GM12878 (cell line): ENCODE measurements at regions of chr16 and their contacts with region 1.

Region 1: DNA sequence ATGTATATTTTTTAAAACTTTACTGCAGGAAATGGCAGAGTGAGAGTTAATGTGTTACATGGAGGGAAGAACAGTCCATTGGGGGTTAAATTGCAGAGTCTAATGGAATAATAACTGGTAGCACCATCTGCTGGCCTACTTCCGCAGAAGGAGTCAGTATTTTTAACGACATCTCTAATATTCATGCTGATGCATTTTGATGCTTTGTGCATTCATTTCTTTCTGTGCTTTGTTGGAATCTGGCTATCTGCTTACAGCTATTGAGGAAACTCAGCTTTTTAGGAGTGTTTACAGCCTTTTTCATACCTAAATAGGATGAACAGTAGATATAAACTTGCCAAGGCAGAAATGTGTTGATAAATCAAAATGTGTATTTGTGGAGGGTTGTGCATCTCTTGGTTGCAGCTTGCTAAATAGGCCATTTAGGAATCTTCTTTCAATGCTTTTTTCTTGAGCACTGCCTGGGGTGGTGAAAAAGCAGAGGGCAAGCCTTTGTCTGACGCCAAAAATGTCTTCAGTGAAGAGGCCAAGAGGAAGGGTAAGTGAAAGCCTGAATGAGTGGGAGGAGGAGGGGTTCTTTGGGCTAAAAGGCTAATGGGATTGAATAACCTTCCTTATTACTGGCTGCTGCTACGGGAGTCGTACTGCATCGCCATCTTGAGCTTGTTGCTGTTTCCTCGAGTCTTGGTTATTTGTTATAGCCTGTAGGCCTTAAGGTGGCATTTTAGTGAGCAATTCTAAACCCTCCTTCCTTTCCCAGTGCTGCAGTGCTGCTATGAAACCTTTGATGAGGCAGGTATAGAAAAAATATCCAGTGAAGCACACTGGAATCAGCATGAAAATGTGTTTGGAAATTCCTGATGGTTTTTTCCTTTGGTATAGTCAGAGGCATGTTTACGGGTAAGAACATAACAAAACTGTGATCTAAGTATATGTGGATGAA is 153.3 kb downstream of the CHD9 start:
- DNase-seq: peak; percentile 69
- ATAC-seq: peak; percentile 83
- H3K4me3 ChIP-seq: peak overlapping the region; percentile 72
- H3K27ac ChIP-seq: peak overlapping the region; percentile 95
- H3K4me1 ChIP-seq: peaks cover 3% of the 10 kb centered on the region; the same call in 1 of the 2 replicates
- H3K27me3 ChIP-seq: no peaks in the 10 kb centered on the region
- CTCF ChIP-seq: peak; percentile 51 to 63 (median 55)
- EP300 ChIP-seq: no peak
- POLR2A ChIP-seq: peak; percentile 57; the same call in 1 of the 2 replicates
- RAD21 ChIP-seq: peak; percentile 58

Region 2: GRCh38 chr16:52837251-52837650 is 370.8 kb before region 1 on chr16:
- CTCF ChIA-PET with region 1: no interaction called
- POLR2A ChIA-PET with region 1: no interaction called
- RAD21 ChIA-PET with region 1: no interaction called
- SMC1A ChIA-PET with region 1: no interaction called
- in situ Hi-C with region 1: no loop called
- intact Hi-C with region 1: no loop called
- DNase-seq: no peak
- ATAC-seq: no peak
- H3K4me3 ChIP-seq: no peak overlapping the region
- H3K27ac ChIP-seq: no peak overlapping the region
- H3K4me1 ChIP-seq: no peaks in the 10 kb centered on the region
- H3K27me3 ChIP-seq: no peaks in the 10 kb centered on the region
- CTCF ChIP-seq: no peak
- EP300 ChIP-seq: no peak
- POLR2A ChIP-seq: no peak
- RAD21 ChIP-seq: no peak

Region 3: GRCh38 chr16:52976539-52977167 is 231.4 kb before region 1 on chr16:
- CTCF ChIA-PET with region 1: interaction called, 8 read pairs
- POLR2A ChIA-PET with region 1: no interaction called
- RAD21 ChIA-PET with region 1: interaction called, 6 read pairs
- SMC1A ChIA-PET with region 1: no interaction called
- in situ Hi-C with region 1: no loop called
- intact Hi-C with region 1: loop called (anchors 2 kb)
- DNase-seq: no peak
- ATAC-seq: peak; percentile 84
- H3K4me3 ChIP-seq: no peak overlapping the region
- H3K27ac ChIP-seq: no peak overlapping the region
- H3K4me1 ChIP-seq: no peaks in the 10 kb centered on the region
- H3K27me3 ChIP-seq: no peaks in the 10 kb centered on the region
- CTCF ChIP-seq: peak; percentile 38 to 55 (median 55); a peak in 5 of 6 replicates
- EP300 ChIP-seq: no peak
- POLR2A ChIP-seq: no peak
- RAD21 ChIP-seq: peak; percentile 69

Region 4: DNA sequence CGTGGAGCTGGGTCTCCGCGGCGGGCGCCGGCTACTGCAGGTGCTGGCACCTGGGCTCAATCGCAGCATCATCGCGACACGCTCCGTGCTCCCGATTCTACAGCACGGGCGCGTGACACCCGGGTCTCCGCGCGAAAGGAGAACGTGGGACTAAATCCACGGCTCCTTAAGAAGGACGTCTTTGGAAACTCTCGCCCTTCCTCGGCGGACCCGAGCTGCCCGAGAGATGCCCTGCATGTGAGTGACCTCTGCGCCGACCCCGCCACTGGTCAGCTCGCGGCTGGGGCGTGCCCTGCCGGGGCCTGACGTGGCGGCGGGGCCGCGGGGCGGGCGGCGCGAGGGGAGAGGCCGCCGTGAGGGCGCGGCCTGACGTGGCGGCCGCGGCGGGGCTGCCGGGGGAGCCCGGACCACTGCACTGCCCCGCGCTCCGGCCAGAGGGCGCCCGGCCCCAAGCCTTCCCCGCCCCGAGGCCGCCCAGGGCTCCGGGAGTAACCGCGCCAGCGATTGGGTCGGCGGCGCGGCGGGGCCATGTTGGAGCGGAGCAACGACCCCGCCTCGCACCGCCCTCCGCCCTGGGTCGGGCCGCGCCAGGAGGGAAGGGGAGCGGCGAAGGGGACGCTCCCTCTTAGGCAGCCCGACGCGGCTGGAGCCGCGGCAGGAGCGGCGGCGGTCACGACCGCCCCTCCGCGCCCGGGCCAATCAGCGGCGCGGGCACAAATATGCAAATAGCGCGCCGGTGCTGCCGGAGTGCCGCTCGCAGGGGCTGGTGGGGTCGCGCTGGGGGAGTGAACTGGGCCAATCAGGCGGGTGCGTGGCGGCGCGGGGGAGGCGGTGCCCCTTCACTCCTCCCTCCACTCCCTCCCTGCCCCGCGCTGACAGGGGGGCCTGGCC is 77.7 kb before region 1 on chr16:
- CTCF ChIA-PET with region 1: interaction called, 13 read pairs
- POLR2A ChIA-PET with region 1: no interaction called
- RAD21 ChIA-PET with region 1: interaction called, 4 read pairs
- SMC1A ChIA-PET with region 1: interaction called, 9 read pairs
- in situ Hi-C with region 1: loop called (anchors 5 kb)
- intact Hi-C with region 1: loop called (anchors 1 kb)
- DNase-seq: peak; percentile 68
- ATAC-seq: peak; percentile 91
- H3K4me3 ChIP-seq: peak overlapping the region; percentile 67
- H3K27ac ChIP-seq: peak overlapping the region; percentile 79
- H3K4me1 ChIP-seq: peaks cover 20% of the 10 kb centered on the region
- H3K27me3 ChIP-seq: no peaks in the 10 kb centered on the region
- CTCF ChIP-seq: peak; percentile 47 to 81 (median 58); a peak in 5 of 6 replicates
- EP300 ChIP-seq: no peak; a peak in 1 of 4 replicates
- POLR2A ChIP-seq: peak; percentile 81
- RAD21 ChIP-seq: peak; percentile 73

Region 5: GRCh38 chr16:53159781-53160436 is 48.2 kb before region 1 on chr16:
- CTCF ChIA-PET with region 1: interaction called, 16 read pairs
- POLR2A ChIA-PET with region 1: no interaction called
- RAD21 ChIA-PET with region 1: interaction called, 7 read pairs
- SMC1A ChIA-PET with region 1: interaction called, 21 read pairs
- in situ Hi-C with region 1: no loop called
- intact Hi-C with region 1: loop called (anchors 5 kb)
- DNase-seq: peak; percentile 20
- ATAC-seq: peak; percentile 99
- H3K4me3 ChIP-seq: no peak overlapping the region
- H3K27ac ChIP-seq: no peak overlapping the region
- H3K4me1 ChIP-seq: no peaks in the 10 kb centered on the region
- H3K27me3 ChIP-seq: no peaks in the 10 kb centered on the region
- CTCF ChIP-seq: peak; percentile 61 to 67 (median 65)
- EP300 ChIP-seq: no peak
- POLR2A ChIP-seq: no peak
- RAD21 ChIP-seq: peak; percentile 66

Region 6: DNA sequence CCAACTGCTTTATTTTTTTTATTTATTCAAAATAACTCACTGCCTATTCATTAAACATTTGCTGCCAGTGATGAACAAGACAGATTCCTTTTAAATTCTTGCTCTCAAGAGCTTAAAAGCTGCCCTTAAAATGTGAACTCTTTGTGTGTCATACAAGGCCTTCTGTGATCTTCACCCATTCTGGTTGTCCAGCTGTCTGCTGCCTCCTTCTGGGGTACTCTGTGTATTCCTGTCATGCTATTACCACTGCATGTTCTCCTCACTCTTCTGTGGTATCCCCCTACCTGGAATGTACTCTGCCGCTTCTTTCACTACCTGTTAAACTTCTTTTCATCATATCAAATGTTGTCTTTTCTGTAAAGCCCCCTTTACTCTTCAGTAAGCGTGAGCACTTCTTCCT is 12.5 kb after region 1 on chr16:
- CTCF ChIA-PET with region 1: interaction called, 10 read pairs
- POLR2A ChIA-PET with region 1: interaction called, 3 read pairs
- RAD21 ChIA-PET with region 1: interaction called, 6 read pairs
- SMC1A ChIA-PET with region 1: interaction called, 19 read pairs
- in situ Hi-C with region 1: no loop called
- intact Hi-C with region 1: no loop called
- DNase-seq: no peak
- ATAC-seq: peak; percentile 81
- H3K4me3 ChIP-seq: no peak overlapping the region
- H3K27ac ChIP-seq: peak overlapping the region; percentile 38; the same call in 1 of the 2 replicates
- H3K4me1 ChIP-seq: peaks cover 18% of the 10 kb centered on the region; the same call in 1 of the 2 replicates
- H3K27me3 ChIP-seq: no peaks in the 10 kb centered on the region
- CTCF ChIP-seq: peak; percentile 25 to 40 (median 38); a peak in 3 of 6 replicates
- EP300 ChIP-seq: no peak
- POLR2A ChIP-seq: no peak
- RAD21 ChIP-seq: peak; percentile 57

Region 7: DNA sequence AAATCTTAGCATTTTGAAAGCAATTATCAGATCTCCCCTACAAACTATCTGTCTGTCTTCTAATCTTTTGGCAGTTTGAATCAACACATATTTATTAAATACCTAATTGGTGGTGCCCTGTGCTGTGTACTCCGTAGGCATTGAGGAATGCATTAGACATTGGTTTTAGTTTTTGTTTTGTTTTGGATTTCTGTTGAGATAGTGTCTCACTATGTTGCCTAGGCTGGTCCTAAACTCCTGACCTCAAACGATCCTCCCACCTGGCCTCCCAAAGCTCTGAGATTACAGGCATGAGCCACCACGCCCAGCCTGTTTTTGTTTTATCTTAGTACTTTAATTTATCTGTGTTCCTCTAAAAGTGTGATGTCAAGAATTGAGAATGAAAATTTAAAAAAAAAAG is 101.4 kb after region 1 on chr16:
- CTCF ChIA-PET with region 1: no interaction called
- POLR2A ChIA-PET with region 1: no interaction called
- RAD21 ChIA-PET with region 1: no interaction called
- SMC1A ChIA-PET with region 1: no interaction called
- in situ Hi-C with region 1: no loop called
- intact Hi-C with region 1: no loop called
- DNase-seq: no peak
- ATAC-seq: no peak
- H3K4me3 ChIP-seq: no peak overlapping the region
- H3K27ac ChIP-seq: no peak overlapping the region
- H3K4me1 ChIP-seq: no peaks in the 10 kb centered on the region
- H3K27me3 ChIP-seq: no peaks in the 10 kb centered on the region
- CTCF ChIP-seq: no peak
- EP300 ChIP-seq: no peak
- POLR2A ChIP-seq: no peak
- RAD21 ChIP-seq: no peak

Region 8: GRCh38 chr16:53374800-53375199 is 166.7 kb after region 1 on chr16:
- CTCF ChIA-PET with region 1: no interaction called
- POLR2A ChIA-PET with region 1: no interaction called
- RAD21 ChIA-PET with region 1: no interaction called
- SMC1A ChIA-PET with region 1: no interaction called
- in situ Hi-C with region 1: no loop called
- intact Hi-C with region 1: no loop called
- DNase-seq: no peak
- ATAC-seq: no peak
- H3K4me3 ChIP-seq: no peak overlapping the region
- H3K27ac ChIP-seq: no peak overlapping the region
- H3K4me1 ChIP-seq: no peaks in the 10 kb centered on the region
- H3K27me3 ChIP-seq: no peaks in the 10 kb centered on the region; a peak in 1 of 4 replicates
- CTCF ChIP-seq: no peak
- EP300 ChIP-seq: no peak
- POLR2A ChIP-seq: no peak
- RAD21 ChIP-seq: no peak